ENCODE measurements at regions of chr21 and their contacts with region 1.

Region 1: GRCh38 chr21:43611598-43612369 is 47.5 kb downstream of the HSF2BP start:
- DNase-seq: peak; percentile 82
- H3K4me3 ChIP-seq: no peak overlapping the region
- H3K27ac ChIP-seq: peak overlapping the region; percentile 69
- H3K27me3 ChIP-seq: no peaks in the 10 kb centered on the region
- CTCF ChIP-seq: peak; percentile 91

Region 2: GRCh38 chr21:43600642-43601402 is 11.0 kb before region 1 on chr21:
- CTCF ChIA-PET with region 1: interaction called, 17 read pairs
- POLR2A ChIA-PET with region 1: interaction called, 3 read pairs
- DNase-seq: peak; percentile 84
- H3K4me3 ChIP-seq: no peak overlapping the region
- H3K27ac ChIP-seq: peak overlapping the region; percentile 88
- H3K27me3 ChIP-seq: no peaks in the 10 kb centered on the region
- CTCF ChIP-seq: no peak

Region 3: GRCh38 chr21:43626390-43626789 is 14.6 kb after region 1 on chr21:
- CTCF ChIA-PET with region 1: interaction called, 12 read pairs
- POLR2A ChIA-PET with region 1: interaction called, 3 read pairs
- DNase-seq: no peak
- H3K4me3 ChIP-seq: no peak overlapping the region
- H3K27ac ChIP-seq: no peak overlapping the region
- H3K27me3 ChIP-seq: no peaks in the 10 kb centered on the region
- CTCF ChIP-seq: no peak

Region 4: GRCh38 chr21:43634618-43635017 is 22.8 kb after region 1 on chr21:
- CTCF ChIA-PET with region 1: interaction called, 13 read pairs
- POLR2A ChIA-PET with region 1: no interaction called
- DNase-seq: no peak
- H3K4me3 ChIP-seq: no peak overlapping the region
- H3K27ac ChIP-seq: no peak overlapping the region
- H3K27me3 ChIP-seq: no peaks in the 10 kb centered on the region
- CTCF ChIP-seq: no peak

Region 5: DNA sequence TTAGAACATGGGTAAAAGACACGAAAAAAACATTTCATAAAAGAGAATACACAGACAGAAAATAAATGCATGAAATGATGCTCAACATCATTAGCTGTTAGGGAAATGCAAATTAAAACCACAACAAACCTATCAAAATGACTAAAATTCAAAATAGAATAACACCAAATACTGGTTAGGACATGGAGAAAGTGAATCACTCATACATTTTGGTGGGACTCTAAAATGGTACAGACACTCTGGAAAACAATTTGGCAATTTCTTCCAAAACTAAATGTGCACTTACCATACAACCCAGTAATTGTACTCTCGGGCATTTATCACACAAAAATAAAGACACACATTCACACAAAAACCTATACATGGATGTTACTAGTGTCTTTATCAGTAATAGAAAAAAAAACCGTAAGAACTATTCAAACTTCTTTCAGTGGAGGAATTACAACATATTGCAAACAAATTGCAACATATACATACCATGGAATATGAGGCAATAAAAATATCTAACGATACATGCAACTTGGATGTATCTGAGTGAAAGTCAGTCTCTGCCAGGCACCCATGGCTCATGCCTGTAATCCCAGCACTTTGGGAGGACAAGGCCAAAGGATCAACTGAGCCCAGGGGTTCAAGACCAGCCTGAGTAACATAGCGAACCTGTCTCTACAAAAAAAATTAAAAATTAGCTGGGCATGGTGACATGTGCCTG is 27.8 kb after region 1 on chr21:
- CTCF ChIA-PET with region 1: interaction called, 35 read pairs
- POLR2A ChIA-PET with region 1: no interaction called
- DNase-seq: peak; percentile 50
- H3K4me3 ChIP-seq: no peak overlapping the region
- H3K27ac ChIP-seq: peak overlapping the region; percentile 78
- H3K27me3 ChIP-seq: no peaks in the 10 kb centered on the region
- CTCF ChIP-seq: no peak

Region 6: GRCh38 chr21:43646550-43647260 is 34.9 kb after region 1 on chr21:
- CTCF ChIA-PET with region 1: interaction called, 35 read pairs
- POLR2A ChIA-PET with region 1: no interaction called
- DNase-seq: peak; percentile 81
- H3K4me3 ChIP-seq: no peak overlapping the region
- H3K27ac ChIP-seq: no peak overlapping the region
- H3K27me3 ChIP-seq: peaks cover 3% of the 10 kb centered on the region
- CTCF ChIP-seq: peak; percentile 99

Measured in AG04450 (cell line).